HCT116 (cell line): ENCODE measurements at regions of chr15 and their contacts with region 1.

Region 1: GRCh38 chr15:68650901-68651709 is 72.3 kb downstream of the CORO2B start:
- DNase-seq: peak; percentile 51
- ATAC-seq: peak; percentile 100
- H3K4me3 ChIP-seq: 0 out of 4 replicates have a peak overlapping the region, but pooled peaks of 1 of the 2 experiments have one; percentile 4
- H3K27ac ChIP-seq: no peak overlapping the region
- H3K4me1 ChIP-seq: peaks cover 2 to 10% of the 10 kb centered on the region in 2 experiments; a peak in 2 of 4 replicates
- H3K27me3 ChIP-seq: no peaks in the 10 kb centered on the region
- CTCF ChIP-seq: peak; percentile 74 to 99 (median 93)
- POLR2A ChIP-seq: no peak
- RAD21 ChIP-seq: peak; percentile 77

Region 2: DNA sequence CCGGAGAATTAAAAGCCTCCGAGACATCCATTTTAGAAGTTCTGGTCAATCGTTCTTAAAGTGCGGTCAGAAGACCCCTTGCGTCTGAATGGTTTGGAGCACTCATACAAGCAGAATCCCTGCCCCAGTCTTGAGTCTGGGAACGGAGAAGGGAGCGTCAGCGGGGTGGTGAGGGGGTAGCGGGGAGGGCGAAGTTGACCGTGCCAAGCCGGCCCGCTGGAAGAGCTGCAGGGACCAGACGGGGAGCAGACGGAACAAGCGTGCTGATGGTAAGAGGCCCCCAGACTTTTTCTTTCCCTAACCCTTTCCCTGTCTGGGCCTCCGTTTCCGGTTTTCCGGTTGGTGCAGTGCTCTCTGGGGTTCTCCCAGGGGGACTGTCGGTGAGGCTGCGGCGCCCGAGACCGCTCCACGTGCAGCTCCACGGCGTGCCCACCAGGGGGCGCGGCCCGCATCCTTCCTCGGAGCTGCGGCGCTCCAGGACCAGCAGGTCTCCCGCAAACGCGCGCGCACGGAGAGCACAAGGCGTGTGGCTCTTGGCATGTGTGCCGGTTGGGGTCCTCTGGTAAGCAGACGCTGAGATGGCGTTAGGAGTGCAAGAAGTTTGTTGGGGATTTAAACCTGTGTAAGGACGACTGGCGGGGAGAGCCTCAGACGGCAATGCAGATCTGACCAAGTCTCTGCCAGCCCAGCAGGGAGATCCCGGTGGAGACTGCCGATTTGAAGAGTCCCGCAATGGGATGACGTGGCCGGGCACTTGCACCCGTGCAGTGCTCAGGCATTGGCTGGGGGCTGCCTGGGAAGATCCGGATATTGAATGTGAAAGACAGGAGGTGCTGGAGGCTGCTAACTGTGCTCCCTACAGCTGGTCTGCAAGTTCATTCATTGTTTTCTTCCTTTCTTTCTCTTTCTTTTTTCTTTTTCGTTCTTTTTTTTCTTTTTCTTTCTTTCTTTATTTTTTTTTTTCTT is 91.5 kb before region 1 on chr15:
- CTCF ChIA-PET with region 1: interaction called, 5 read pairs
- POLR2A ChIA-PET with region 1: no interaction called
- RAD21 ChIA-PET with region 1: no interaction called
- intact Hi-C with region 1: loop called (anchors 1 kb)
- DNase-seq: peak; percentile 56
- ATAC-seq: peak; percentile 97
- H3K4me3 ChIP-seq: peak overlapping the region; percentile 44 to 56
- H3K27ac ChIP-seq: no peak overlapping the region
- H3K4me1 ChIP-seq: peaks cover 0 to 15% of the 10 kb centered on the region in 2 experiments; a peak in 2 of 4 replicates
- H3K27me3 ChIP-seq: no peaks in the 10 kb centered on the region
- CTCF ChIP-seq: peak; percentile 85 to 92 (median 92)
- POLR2A ChIP-seq: no peak
- RAD21 ChIP-seq: peak; percentile 91